Sigmoid colon (tissue), 7 donors: ENCODE measurements at regions of chr13 and their contacts with region 1.

Region 1: DNA sequence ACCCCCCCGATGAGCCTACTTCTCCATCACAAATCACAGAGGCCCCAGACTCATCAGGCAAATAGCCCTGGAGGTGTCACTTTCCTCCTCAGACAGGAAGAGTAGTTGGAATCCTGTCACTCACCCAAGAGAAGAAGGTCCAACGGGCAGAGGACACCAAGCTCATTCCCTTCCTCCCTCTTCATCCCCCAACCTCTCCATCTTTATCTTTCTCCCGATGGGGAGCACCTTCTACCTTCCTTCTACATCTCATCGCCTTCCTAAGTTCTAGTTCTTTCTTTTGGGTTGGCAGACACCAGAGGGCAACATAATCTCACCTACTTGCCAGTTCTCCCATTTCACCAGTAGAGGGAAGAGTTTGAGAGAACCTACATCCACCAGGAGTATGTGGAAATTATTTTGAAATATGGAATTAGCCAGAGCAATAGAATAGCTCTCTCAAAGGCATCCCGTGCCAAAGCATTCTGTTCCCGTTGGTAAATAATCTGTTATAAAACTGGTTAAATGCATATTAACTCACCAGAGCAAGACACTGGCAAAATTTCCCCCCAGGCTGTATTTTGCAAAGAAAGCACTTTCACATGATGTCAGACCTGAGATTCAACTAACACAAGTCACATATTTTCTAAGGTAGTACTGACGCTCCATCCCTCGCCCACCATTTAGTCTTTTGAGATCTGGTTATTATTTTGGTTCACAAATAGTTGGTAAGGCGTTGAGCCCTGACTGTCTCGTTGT is 55.0 kb downstream of the ZIC5 start:
- DNase-seq: no peak
- H3K4me3 ChIP-seq: no peak overlapping the region
- H3K27ac ChIP-seq: no peak overlapping the region
- H3K4me1 ChIP-seq: no peaks in the 10 kb centered on the region
- H3K27me3 ChIP-seq: peaks cover 3 to 44% (median 9%) of the 10 kb centered on the region in 3 donors
- CTCF ChIP-seq: peak; percentile 32 to 79 (median 62)
- EP300 ChIP-seq: no peak
- POLR2A ChIP-seq: no peak

Region 2: GRCh38 chr13:100139817-100140216 is 223.3 kb after region 1 on chr13:
- intact Hi-C with region 1: no loop called
- DNase-seq: no peak
- H3K4me3 ChIP-seq: no peak overlapping the region
- H3K27ac ChIP-seq: no peak overlapping the region
- H3K4me1 ChIP-seq: peaks cover 0 to 3% (median 0%) of the 10 kb centered on the region in 4 donors
- H3K27me3 ChIP-seq: no peaks in the 10 kb centered on the region
- CTCF ChIP-seq: no peak
- EP300 ChIP-seq: no peak
- POLR2A ChIP-seq: no peak

Region 3: DNA sequence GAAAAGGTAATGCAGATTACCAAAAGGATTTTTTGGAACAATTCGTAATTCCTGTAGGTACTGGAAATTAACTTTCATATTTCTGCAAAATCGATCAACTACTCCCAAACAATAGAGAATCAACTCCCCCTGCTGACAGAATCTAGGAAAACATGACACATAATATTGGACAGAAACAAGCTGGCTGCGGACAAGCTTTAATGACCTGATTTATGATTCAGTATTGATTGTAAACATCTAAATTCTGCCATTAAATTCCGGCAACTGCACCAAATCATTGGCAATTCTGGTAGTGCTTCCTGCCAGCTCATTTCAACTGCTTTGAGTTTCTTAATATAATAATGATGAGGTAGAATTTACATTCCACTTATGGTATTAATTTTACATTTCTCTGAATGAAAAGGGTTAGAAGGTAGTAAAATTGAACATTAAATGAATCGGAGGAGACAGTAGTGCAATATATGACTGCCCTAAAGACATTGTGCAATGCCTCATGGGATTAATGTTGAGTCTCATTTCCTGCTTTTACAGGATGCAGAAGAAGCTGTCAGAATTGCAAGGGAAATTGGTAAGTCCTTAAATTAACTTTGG is 318.9 kb after region 1 on chr13:
- intact Hi-C with region 1: loop called (anchors 5 kb)
- DNase-seq: no peak
- H3K4me3 ChIP-seq: no peak overlapping the region
- H3K27ac ChIP-seq: no peak overlapping the region
- H3K4me1 ChIP-seq: peaks cover 0 to 6% (median 5%) of the 10 kb centered on the region in 4 donors
- H3K27me3 ChIP-seq: no peaks in the 10 kb centered on the region
- CTCF ChIP-seq: peak in 3 of 4 experiments; percentile 17 to 36 (median 29)
- EP300 ChIP-seq: no peak
- POLR2A ChIP-seq: no peak

Region 4: DNA sequence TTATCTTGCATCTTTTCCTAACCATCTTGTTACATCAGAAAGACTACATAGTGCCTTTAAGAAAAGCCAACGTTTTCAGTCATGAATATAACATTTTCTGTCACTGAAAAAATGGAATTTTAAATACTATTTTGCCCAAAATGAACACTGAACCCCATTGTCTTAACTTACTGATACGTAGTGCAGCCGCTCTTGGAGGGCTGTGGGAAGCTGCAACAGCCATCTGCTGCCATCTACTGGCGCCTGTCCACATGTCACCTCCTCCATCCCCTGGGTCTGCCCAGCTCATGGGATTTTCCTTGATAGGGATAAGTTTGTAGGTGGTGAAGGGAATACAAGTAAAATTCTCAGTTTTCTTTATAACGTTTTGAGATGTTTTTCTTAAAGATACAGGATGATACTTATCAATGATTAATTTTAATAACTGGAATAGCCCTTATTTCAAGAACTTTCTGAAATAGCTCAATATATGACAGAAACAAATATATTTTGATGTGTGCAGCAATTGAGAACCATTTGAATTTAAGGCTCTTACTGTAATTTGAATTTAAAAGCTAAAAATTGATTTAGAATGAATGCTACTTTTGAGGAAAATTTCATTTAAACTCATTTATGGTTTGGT is 598.4 kb after region 1 on chr13:
- intact Hi-C with region 1: loop called (anchors 1 kb)
- DNase-seq: peak; percentile 87
- H3K4me3 ChIP-seq: no peak overlapping the region
- H3K27ac ChIP-seq: no peak overlapping the region
- H3K4me1 ChIP-seq: peaks cover 0 to 9% (median 0%) of the 10 kb centered on the region in 4 donors
- H3K27me3 ChIP-seq: no peaks in the 10 kb centered on the region
- CTCF ChIP-seq: peak; percentile 47 to 92 (median 76)
- EP300 ChIP-seq: no peak
- POLR2A ChIP-seq: no peak